Caco-2 (cell line): ENCODE measurements at regions of chr13 and their contacts with region 1.

Region 1: GRCh38 chr13:44435142-44435982 is 61.7 kb downstream of the SERP2 start:
- DNase-seq: peak; percentile 95 to 99
- H3K4me3 ChIP-seq: peak overlapping the region; percentile 91
- H3K4me3 Mint-ChIP-seq: peak overlapping the region; percentile 93
- H3K27ac Mint-ChIP-seq: peak overlapping the region; percentile 98
- H3K4me1 ChIP-seq: peaks cover 50% of the 10 kb centered on the region
- H3K4me1 Mint-ChIP-seq: peaks cover 48% of the 10 kb centered on the region
- H3K27me3 ChIP-seq: no peaks in the 10 kb centered on the region
- H3K27me3 Mint-ChIP-seq: no peaks in the 10 kb centered on the region
- CTCF ChIP-seq: no peak

Region 2: DNA sequence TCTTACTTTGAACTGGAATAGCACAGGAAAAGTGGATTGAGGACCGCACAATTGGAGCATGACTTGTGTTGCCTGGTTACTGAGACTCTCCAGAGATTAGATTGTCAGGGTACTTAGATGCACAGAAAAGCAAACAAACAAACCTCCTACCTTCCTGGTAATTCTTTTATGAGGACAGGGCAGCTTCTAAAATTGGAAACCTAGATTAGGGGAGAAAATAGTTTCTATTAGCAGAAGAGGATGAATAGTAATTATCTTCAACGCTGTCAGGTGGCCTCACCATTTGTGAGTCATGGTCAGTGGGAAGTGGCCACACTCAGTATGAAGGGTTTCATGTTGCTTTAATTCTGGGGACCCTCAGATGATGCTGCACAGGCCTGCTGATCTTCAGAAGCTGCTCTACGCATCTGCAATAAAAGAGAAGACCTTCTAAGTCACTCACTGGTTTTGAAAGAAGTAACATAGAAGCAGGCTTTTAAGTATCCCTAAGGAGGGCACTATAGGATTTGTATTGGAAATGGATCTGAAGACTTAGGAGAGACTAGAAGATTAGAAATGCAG is 448.9 kb before region 1 on chr13:
- CTCF ChIA-PET with region 1: no interaction called
- POLR2A ChIA-PET with region 1: interaction called, 3 read pairs
- intact Hi-C with region 1: loop called (anchors 5 kb)
- DNase-seq: no peak
- H3K4me3 ChIP-seq: no peak overlapping the region
- H3K4me3 Mint-ChIP-seq: no peak overlapping the region
- H3K27ac Mint-ChIP-seq: no peak overlapping the region
- H3K4me1 ChIP-seq: no peaks in the 10 kb centered on the region
- H3K4me1 Mint-ChIP-seq: peaks cover 7% of the 10 kb centered on the region
- H3K27me3 ChIP-seq: no peaks in the 10 kb centered on the region
- H3K27me3 Mint-ChIP-seq: no peaks in the 10 kb centered on the region
- CTCF ChIP-seq: no peak

Region 3: DNA sequence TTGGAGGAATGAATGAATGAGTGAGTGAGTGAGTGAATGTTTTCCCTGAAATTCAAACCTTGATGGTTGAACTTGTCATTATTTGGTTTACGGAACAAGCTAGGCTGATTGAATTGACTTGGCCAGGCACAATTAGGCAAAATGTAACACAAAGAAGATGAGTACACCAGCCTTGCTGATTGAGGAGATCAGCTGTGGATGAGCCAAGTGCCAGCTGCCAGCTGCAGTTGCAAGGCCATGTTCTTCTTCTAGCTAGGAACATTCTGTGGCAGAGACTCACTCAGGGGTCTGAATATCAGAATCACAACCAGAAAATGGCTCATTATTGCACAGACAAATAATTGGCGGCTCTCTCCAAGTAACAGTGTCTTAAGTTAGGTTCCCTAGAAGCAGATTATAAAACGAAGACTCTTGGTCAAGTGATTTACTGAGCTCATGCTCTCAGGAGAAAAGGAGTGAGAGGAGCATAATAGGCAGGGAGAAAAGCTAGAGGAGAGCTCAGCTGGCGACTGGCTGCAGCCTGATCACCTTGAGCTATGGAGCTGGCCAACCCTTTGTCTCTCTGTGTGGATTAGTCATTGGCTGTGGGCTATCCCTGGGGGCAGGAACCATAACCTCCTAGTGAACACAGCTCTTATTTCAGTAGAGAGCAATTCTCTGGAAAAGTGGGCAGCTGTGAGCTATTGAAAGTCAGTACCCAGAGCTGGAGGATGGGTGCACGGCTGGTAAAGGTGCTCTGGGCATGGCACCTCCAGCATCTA is 287.0 kb before region 1 on chr13:
- CTCF ChIA-PET with region 1: no interaction called
- POLR2A ChIA-PET with region 1: interaction called, 14 read pairs
- intact Hi-C with region 1: no loop called
- DNase-seq: no peak
- H3K4me3 ChIP-seq: no peak overlapping the region
- H3K4me3 Mint-ChIP-seq: no peak overlapping the region
- H3K27ac Mint-ChIP-seq: no peak overlapping the region
- H3K4me1 ChIP-seq: peaks cover 20% of the 10 kb centered on the region
- H3K4me1 Mint-ChIP-seq: peaks cover 29% of the 10 kb centered on the region
- H3K27me3 ChIP-seq: no peaks in the 10 kb centered on the region
- H3K27me3 Mint-ChIP-seq: no peaks in the 10 kb centered on the region
- CTCF ChIP-seq: no peak

Region 4: GRCh38 chr13:44243198-44243857 is 192.0 kb before region 1 on chr13:
- CTCF ChIA-PET with region 1: interaction called, 4 read pairs
- POLR2A ChIA-PET with region 1: interaction called, 7 read pairs
- intact Hi-C with region 1: loop called (anchors 1 kb)
- DNase-seq: peak; percentile 57 to 75
- H3K4me3 ChIP-seq: no peak overlapping the region
- H3K4me3 Mint-ChIP-seq: no peak overlapping the region
- H3K27ac Mint-ChIP-seq: peak overlapping the region; percentile 62
- H3K4me1 ChIP-seq: peaks cover 22% of the 10 kb centered on the region
- H3K4me1 Mint-ChIP-seq: peaks cover 36% of the 10 kb centered on the region
- H3K27me3 ChIP-seq: no peaks in the 10 kb centered on the region
- H3K27me3 Mint-ChIP-seq: no peaks in the 10 kb centered on the region
- CTCF ChIP-seq: peak; percentile 46 to 56

Region 5: GRCh38 chr13:44364348-44365049 is 70.9 kb before region 1 on chr13:
- CTCF ChIA-PET with region 1: interaction called, 8 read pairs
- POLR2A ChIA-PET with region 1: interaction called, 44 read pairs
- intact Hi-C with region 1: loop called (anchors 1 kb)
- DNase-seq: peak; percentile 80 to 89
- H3K4me3 ChIP-seq: no peak overlapping the region
- H3K4me3 Mint-ChIP-seq: peak overlapping the region; percentile 5
- H3K27ac Mint-ChIP-seq: peak overlapping the region; percentile 81
- H3K4me1 ChIP-seq: peaks cover 83% of the 10 kb centered on the region
- H3K4me1 Mint-ChIP-seq: peaks cover 47% of the 10 kb centered on the region
- H3K27me3 ChIP-seq: no peaks in the 10 kb centered on the region
- H3K27me3 Mint-ChIP-seq: no peaks in the 10 kb centered on the region
- CTCF ChIP-seq: no peak

Region 6: GRCh38 chr13:44403461-44404056 is 31.8 kb before region 1 on chr13:
- CTCF ChIA-PET with region 1: interaction called, 5 read pairs
- POLR2A ChIA-PET with region 1: interaction called, 21 read pairs
- intact Hi-C with region 1: loop called (anchors 1 kb)
- DNase-seq: peak in 1 of 2 experiments; percentile 49
- H3K4me3 ChIP-seq: no peak overlapping the region
- H3K4me3 Mint-ChIP-seq: peak overlapping the region; percentile 54
- H3K27ac Mint-ChIP-seq: peak overlapping the region; percentile 79
- H3K4me1 ChIP-seq: peaks cover 46% of the 10 kb centered on the region
- H3K4me1 Mint-ChIP-seq: peaks cover 24% of the 10 kb centered on the region
- H3K27me3 ChIP-seq: no peaks in the 10 kb centered on the region
- H3K27me3 Mint-ChIP-seq: no peaks in the 10 kb centered on the region
- CTCF ChIP-seq: no peak

Region 7: GRCh38 chr13:44484562-44485138 is 49.3 kb after region 1 on chr13:
- CTCF ChIA-PET with region 1: no interaction called
- POLR2A ChIA-PET with region 1: no interaction called
- intact Hi-C with region 1: no loop called
- DNase-seq: no peak
- H3K4me3 ChIP-seq: no peak overlapping the region
- H3K4me3 Mint-ChIP-seq: no peak overlapping the region
- H3K27ac Mint-ChIP-seq: no peak overlapping the region
- H3K4me1 ChIP-seq: no peaks in the 10 kb centered on the region
- H3K4me1 Mint-ChIP-seq: peaks cover 8% of the 10 kb centered on the region
- H3K27me3 ChIP-seq: no peaks in the 10 kb centered on the region
- H3K27me3 Mint-ChIP-seq: no peaks in the 10 kb centered on the region
- CTCF ChIP-seq: no peak

Region 8: DNA sequence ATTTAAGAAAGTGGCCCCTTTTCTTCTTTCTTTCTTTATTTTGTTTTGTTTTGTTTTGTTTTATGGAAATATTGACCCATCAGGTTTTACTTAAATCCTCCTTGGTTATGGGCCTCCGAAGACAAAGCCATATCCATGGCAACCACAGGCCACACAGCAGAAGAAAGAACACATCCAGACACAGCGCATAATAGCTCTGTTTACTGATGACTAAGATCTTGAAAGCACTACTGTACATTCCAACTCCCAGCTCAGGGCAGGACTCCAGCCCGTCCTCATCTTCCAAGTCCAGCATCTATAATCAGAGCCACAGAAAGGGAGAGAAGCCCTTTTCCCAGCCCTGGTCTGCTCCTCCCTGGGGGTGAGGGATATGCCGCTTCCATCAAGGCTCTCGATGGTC is 469.6 kb after region 1 on chr13:
- CTCF ChIA-PET with region 1: interaction called, 15 read pairs
- POLR2A ChIA-PET with region 1: no interaction called
- intact Hi-C with region 1: no loop called
- DNase-seq: peak in 1 of 2 experiments; percentile 30
- H3K4me3 ChIP-seq: no peak overlapping the region
- H3K4me3 Mint-ChIP-seq: no peak overlapping the region
- H3K27ac Mint-ChIP-seq: peak overlapping the region; percentile 33
- H3K4me1 ChIP-seq: no peaks in the 10 kb centered on the region
- H3K4me1 Mint-ChIP-seq: no peaks in the 10 kb centered on the region
- H3K27me3 ChIP-seq: no peaks in the 10 kb centered on the region
- H3K27me3 Mint-ChIP-seq: no peaks in the 10 kb centered on the region
- CTCF ChIP-seq: no peak